MCF 10A (cell line): ENCODE measurements at regions of chr15 and their contacts with region 1.

Region 1: GRCh38 chr15:95018888-95019545 is 787.7 kb downstream of the MCTP2 start:
- DNase-seq: peak; percentile 65
- H3K4me3 Mint-ChIP-seq: no peak overlapping the region
- H3K27ac Mint-ChIP-seq: peak overlapping the region; percentile 75
- H3K4me1 Mint-ChIP-seq: peaks cover 11% of the 10 kb centered on the region
- H3K27me3 Mint-ChIP-seq: no peaks in the 10 kb centered on the region
- CTCF ChIP-seq: no peak

Region 2: DNA sequence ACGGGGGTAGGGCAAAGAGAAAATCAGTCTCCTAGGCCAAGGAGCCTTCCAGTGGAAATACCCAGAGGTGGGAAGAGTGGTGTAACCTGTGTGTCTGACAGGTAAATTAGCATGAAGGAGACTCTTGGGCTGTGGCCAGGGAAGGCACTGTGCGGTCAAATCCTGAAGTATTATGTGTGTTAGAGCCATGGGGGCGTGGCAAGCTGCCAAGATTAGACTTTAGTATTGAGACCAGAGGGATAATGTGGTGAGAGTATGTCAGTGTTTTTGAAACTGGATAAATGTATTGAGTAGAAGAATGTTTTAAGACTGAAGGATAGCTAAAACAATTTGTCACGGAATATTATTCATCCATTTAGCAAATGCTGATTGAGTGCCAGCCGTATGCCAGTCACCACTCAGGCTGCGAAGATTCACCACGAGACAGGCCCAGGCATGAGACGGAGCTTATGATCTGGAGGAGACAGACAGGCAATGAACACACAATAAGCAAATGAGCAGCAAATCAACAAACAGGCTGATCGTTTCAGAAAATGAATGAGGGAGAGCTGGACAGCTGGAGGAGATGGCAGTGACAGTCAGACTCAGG is 341.7 kb before region 1 on chr15:
- CTCF ChIA-PET with region 1: interaction called, 17 read pairs
- POLR2A ChIA-PET with region 1: interaction called, 5 read pairs
- intact Hi-C with region 1: loop called (anchors 2 kb)
- DNase-seq: peak; percentile 87
- H3K4me3 Mint-ChIP-seq: peak overlapping the region; percentile 59
- H3K27ac Mint-ChIP-seq: peak overlapping the region; percentile 79
- H3K4me1 Mint-ChIP-seq: peaks cover 31% of the 10 kb centered on the region
- H3K27me3 Mint-ChIP-seq: no peaks in the 10 kb centered on the region
- CTCF ChIP-seq: no peak